Activated CD4-positive, alpha-beta memory T cell treated with anti-CD3 and anti-CD28 coated beads, Interleukin-2, amount 10 ng/mL, durations not matched to agents 7 days and 5 days (primary cell): ENCODE measurements at regions of chr1 and their contacts with region 1.

Region 1: DNA sequence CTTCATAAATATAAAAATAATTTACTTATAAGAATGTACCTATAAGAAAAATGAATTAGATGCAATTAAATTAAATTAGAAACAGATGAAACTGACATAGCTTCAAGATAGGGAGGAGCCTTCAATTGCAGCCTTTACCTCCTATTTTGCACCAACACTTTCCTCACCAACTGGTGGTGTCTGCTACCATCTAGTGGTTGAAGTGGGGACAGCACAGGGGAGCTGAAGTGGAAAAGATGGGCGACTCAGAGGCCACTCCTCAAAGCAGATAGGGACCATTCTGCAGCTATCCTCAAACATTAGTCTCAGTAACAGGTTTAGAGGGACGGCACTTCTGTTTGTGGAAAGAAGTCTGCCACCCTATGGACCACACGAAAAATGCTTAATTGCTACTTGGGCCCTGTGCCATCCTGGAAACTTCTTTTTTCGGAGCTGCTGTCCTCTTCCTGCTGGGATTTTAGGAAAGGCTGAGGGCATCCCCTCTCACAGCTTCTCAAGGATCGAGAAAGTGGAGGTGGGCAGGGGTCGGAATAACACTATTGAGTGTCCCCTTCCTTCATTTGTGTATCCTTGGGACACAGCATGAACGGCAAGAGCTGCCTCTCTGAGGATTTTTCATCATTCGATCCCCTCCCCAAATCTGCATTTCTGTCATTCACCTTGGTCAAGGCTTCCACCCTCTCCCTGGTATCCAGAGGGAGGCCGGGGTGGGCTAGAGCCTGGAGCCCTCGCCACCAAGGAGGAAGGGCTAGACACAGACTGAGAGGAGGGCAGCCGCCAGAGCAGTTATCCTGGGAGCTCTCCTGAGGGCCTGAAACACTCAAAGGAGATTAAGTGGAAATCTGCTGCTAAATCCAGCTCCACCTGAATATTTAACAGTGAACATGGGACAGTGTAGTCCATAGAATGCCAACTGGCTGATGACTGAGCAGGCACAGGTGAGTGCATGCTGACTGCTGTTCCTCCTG is 9.6 kb downstream of the PROK1 start:
- DNase-seq: peak; percentile 85
- H3K4me3 Mint-ChIP-seq: no peak overlapping the region
- H3K27ac Mint-ChIP-seq: no peak overlapping the region
- H3K4me1 Mint-ChIP-seq: no peaks in the 10 kb centered on the region
- H3K27me3 Mint-ChIP-seq: no peaks in the 10 kb centered on the region

Region 2: GRCh38 chr1:110196917-110197765 is 263.4 kb before region 1 on chr1:
- CTCF ChIA-PET with region 1: interaction called, 68 read pairs
- POLR2A ChIA-PET with region 1: interaction called, 12 read pairs
- DNase-seq: peak; percentile 56
- H3K4me3 Mint-ChIP-seq: no peak overlapping the region
- H3K27ac Mint-ChIP-seq: no peak overlapping the region
- H3K4me1 Mint-ChIP-seq: no peaks in the 10 kb centered on the region
- H3K27me3 Mint-ChIP-seq: no peaks in the 10 kb centered on the region

Region 3: DNA sequence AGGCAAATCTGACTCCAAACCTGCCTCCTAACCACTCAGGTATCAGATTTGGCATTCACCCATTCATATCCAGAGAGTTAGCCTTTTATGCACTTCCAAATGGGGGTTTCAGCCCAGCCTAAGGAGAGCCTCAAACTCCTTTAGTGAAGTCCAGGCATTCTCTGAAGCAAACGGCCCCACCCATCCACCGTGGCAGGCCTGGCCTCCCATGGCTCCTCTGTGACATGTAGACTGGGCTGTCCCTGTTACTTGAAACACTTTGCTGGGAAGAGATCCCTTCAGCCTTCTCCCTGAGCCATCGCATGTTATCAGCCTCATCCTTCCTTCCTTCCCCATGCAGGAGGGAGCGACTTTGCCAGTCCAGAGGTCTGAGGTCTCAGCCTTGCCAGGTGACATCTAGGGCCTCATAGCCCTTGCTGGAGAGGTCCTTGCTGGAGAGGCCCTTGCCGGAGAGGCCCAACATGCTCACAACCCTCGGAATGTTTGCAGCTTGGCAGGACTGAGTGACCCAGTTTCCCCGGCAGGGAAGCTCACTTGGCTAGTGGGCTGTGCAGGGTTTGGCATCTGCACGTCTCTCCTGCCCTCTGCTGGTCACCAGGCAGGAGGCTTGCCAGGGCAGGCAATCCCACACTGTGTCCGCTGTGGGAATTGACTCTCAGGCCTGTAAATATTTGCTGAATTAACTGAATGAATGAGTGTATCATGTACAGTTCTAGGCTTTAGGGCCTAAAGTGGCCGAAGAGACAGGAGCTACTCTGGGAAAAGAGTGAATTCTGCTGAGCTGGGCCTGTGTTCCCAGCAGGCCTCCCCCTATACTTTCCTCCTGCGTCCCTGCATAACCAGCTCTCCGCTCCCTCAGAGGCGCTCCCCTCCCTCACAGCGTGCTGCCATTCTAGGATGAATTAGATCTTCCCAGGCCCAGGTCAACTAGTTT is 148.1 kb before region 1 on chr1:
- CTCF ChIA-PET with region 1: interaction called, 12 read pairs
- POLR2A ChIA-PET with region 1: no interaction called
- DNase-seq: peak; percentile 68
- H3K4me3 Mint-ChIP-seq: no peak overlapping the region
- H3K27ac Mint-ChIP-seq: no peak overlapping the region
- H3K4me1 Mint-ChIP-seq: no peaks in the 10 kb centered on the region
- H3K27me3 Mint-ChIP-seq: no peaks in the 10 kb centered on the region

Region 4: DNA sequence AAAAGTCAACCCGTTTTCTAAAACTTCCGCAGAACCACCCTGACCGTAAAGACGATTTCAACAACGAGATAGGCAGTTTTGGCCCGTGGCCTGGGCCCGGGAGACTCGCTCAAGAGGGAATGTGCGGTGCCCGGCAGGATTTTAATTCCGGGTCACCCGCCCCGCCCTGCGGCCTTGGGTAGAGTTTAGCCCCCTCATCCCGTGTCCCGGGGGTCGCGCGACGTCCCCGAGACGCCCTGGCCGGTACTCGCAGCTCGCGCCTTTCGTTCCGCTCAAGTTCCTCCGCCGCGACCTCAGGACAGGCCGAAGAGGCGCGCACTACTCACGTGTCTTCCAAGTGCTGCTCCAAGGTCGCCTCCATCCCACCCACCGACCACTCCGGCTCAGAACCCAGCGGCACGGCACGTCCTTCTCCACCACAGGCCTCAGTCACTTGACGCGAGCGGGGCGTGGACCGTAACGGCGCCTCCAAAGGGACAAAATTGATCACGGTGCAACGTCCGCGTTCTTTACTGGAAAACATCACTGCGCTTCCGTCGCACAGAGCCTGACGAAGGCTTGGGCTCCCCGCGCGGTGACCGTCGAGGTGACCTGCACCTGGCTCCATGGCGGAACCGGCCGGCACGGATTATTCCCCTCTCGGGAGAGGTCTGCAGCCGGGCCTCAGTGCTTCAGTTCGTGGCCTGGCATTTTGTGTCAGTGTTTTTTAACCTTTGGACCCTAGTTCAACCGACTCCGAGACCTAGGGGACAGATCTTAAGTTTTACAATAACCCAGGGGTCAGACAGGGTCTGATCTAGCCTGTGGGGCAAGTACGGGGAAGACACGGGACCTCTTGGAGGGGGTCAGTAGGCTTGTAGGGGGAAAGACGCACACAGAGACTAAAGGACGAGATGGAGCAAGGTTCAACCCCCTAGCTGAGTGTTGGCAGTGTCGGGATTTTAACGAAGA is 53.0 kb before region 1 on chr1 and contains the start of gene LAMTOR5:
- CTCF ChIA-PET with region 1: interaction called, 188 read pairs
- POLR2A ChIA-PET with region 1: no interaction called
- DNase-seq: peak; percentile 94
- H3K4me3 Mint-ChIP-seq: peak within 1 kb of the TSS; percentile 95
- H3K27ac Mint-ChIP-seq: peak within 1 kb of the TSS; percentile 96
- H3K4me1 Mint-ChIP-seq: peaks cover 27% of the 10 kb centered on the region
- H3K27me3 Mint-ChIP-seq: no peaks in the 10 kb centered on the region
- total RNA-seq, gene LAMTOR5: 127 to 128 TPM

Region 5: GRCh38 chr1:110657351-110657750 is 196.8 kb after region 1 on chr1:
- CTCF ChIA-PET with region 1: no interaction called
- POLR2A ChIA-PET with region 1: no interaction called
- DNase-seq: no peak
- H3K4me3 Mint-ChIP-seq: no peak overlapping the region
- H3K27ac Mint-ChIP-seq: no peak overlapping the region
- H3K4me1 Mint-ChIP-seq: peaks cover 44% of the 10 kb centered on the region
- H3K27me3 Mint-ChIP-seq: no peaks in the 10 kb centered on the region

Region 6: GRCh38 chr1:110787328-110788071 is 327.0 kb after region 1 on chr1:
- CTCF ChIA-PET with region 1: no interaction called
- POLR2A ChIA-PET with region 1: no interaction called
- DNase-seq: peak; percentile 73
- H3K4me3 Mint-ChIP-seq: peak overlapping the region; percentile 57
- H3K27ac Mint-ChIP-seq: peak overlapping the region; percentile 93
- H3K4me1 Mint-ChIP-seq: peaks cover 62% of the 10 kb centered on the region
- H3K27me3 Mint-ChIP-seq: peaks cover 3% of the 10 kb centered on the region